ENCODE measurements at regions of chr12 and their contacts with region 1.

Region 1: DNA sequence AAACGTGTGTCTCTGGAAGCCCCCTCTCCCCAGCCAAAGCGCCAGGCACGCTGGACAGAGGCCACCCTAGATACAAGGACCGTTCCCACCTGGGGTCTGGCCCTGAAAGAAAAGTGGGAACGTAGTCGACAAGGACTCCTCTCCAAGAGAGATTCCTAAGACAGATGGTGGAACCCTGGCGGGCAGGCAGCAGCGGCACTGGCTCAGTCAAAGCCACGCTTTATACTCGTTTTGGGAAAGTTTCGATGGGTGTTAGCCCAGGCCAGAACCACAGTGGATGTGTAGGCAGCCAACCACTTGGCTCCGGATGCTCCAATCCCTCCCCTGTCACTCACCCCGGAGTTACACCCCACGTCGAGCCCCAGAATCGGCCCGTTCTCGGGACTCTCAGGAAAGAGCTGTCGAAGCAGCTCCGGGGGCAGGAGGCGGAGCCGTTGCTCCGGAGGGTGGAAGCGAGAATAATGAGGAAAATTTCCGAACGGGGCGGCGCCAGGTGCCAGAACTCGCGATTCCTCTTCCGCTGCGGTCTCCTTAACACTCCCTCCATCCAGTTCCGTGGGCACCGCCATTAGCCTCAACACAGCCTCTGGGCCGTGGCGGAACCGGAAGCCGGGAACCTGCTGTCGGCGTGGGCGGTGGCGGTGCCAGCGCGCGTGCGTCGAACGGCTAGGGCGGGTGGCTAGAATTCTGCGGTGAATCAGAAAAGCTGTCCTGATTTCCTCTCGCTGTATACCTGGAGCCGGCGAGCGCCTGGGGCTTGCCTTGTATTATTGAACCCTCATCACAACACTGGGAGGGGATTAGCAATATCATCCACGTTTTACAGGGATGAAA is at the start of gene BCDIN3D:
- DNase-seq: peak; percentile 92
- H3K4me3 ChIP-seq: peak within 1 kb of the TSS; percentile 62 to 86
- H3K27ac ChIP-seq: peak within 1 kb of the TSS; percentile 92 to 94
- H3K4me1 ChIP-seq: peaks cover 11 to 18% of the 10 kb centered on the region in 2 experiments; a peak in 3 of 4 replicates
- H3K27me3 ChIP-seq: no peaks in the 10 kb centered on the region; the same call in 1 of the 2 replicates
- CTCF ChIP-seq: no peak
- EP300 ChIP-seq: no peak
- RAD21 ChIP-seq: no peak
- polyA plus RNA-seq, gene BCDIN3D: 2.3 and 3.8 TPM in 2 replicates

Region 2: GRCh38 chr12:49403971-49404450 is 438.7 kb before region 1 on chr12:
- CTCF ChIA-PET with region 1: no interaction called
- POLR2A ChIA-PET with region 1: no interaction called
- DNase-seq: no peak
- H3K4me3 ChIP-seq: no peak overlapping the region
- H3K27ac ChIP-seq: no peak overlapping the region
- H3K4me1 ChIP-seq: peaks cover 5% of the 10 kb centered on the region in 2 experiments; a peak in 3 of 4 replicates
- H3K27me3 ChIP-seq: no peaks in the 10 kb centered on the region
- CTCF ChIP-seq: no peak
- EP300 ChIP-seq: no peak
- RAD21 ChIP-seq: no peak

Region 3: DNA sequence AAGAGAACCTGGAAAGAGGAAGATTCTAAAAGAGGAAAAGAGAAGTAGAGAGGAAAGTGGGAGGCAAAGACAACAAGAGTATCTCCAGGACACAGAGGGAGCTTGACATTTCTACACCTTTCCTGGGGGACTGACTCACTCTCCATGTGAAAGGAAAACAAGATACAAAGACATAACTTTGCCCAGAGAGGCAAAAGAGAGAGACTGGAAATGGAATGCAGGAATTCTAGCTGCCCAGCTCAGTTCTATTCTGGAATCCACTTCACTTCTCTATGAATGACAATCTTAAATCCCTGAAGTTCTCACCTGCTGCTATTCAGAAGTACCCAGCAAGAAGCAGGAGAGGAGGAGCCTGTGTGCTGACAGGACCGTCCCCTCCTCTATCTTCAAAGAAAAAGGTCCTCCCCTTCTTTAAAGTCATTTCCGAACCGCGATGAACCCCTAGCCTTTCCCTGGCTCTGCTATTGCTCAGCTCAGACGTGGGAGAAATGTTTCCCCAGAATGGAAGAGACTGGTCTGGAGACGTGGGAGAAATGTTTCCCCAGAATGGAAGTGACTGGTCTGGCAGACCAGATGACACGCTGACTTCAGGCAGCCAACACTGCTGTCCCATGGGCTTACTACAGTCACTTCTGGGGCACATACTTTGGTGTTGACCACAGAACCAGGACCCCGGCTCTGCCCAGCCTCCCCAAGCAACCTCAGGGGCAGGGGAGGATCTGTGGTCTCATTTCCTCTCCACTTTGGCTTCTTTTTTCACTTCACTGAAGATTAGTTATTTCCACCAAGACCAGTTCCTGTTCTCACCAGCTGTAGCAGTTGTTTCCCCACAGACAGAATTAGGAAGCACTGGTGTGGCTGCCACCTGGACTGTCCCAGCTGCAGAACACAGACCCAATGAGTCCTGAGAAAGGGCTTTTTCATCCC is 143.9 kb before region 1 on chr12:
- CTCF ChIA-PET with region 1: no interaction called
- POLR2A ChIA-PET with region 1: no interaction called
- DNase-seq: no peak
- H3K4me3 ChIP-seq: peak overlapping the region in 1 of 2 experiments; percentile 0; a peak in 1 of 4 replicates
- H3K27ac ChIP-seq: peak overlapping the region in 1 of 2 experiments; percentile 80; a peak in 3 of 4 replicates
- H3K4me1 ChIP-seq: peaks cover 14 to 33% of the 10 kb centered on the region in 2 experiments; a peak in 3 of 4 replicates
- H3K27me3 ChIP-seq: no peaks in the 10 kb centered on the region
- CTCF ChIP-seq: no peak
- EP300 ChIP-seq: no peak
- RAD21 ChIP-seq: no peak

Region 4: GRCh38 chr12:49776413-49776812 is 66.3 kb before region 1 on chr12:
- CTCF ChIA-PET with region 1: interaction called, 59 read pairs
- POLR2A ChIA-PET with region 1: interaction called, 3 read pairs
- DNase-seq: peak; percentile 79
- H3K4me3 ChIP-seq: peak overlapping the region in 1 of 2 experiments; percentile 9; a peak in 1 of 4 replicates
- H3K27ac ChIP-seq: no peak overlapping the region
- H3K4me1 ChIP-seq: no peaks in the 10 kb centered on the region
- H3K27me3 ChIP-seq: no peaks in the 10 kb centered on the region
- CTCF ChIP-seq: peak; percentile 84
- EP300 ChIP-seq: no peak
- RAD21 ChIP-seq: peak; percentile 91

Region 5: GRCh38 chr12:49828133-49829091 is 14.3 kb before region 1 on chr12 and contains the start of gene NCKAP5L:
- CTCF ChIA-PET with region 1: interaction called, 51 read pairs
- POLR2A ChIA-PET with region 1: interaction called, 9 read pairs
- DNase-seq: peak; percentile 99
- H3K4me3 ChIP-seq: peak within 1 kb of the TSS; percentile 87 to 92
- H3K27ac ChIP-seq: peak within 1 kb of the TSS; percentile 80 to 96
- H3K4me1 ChIP-seq: peaks cover 15 to 29% of the 10 kb centered on the region in 2 experiments; a peak in 3 of 4 replicates
- H3K27me3 ChIP-seq: no peaks in the 10 kb centered on the region
- CTCF ChIP-seq: no peak
- EP300 ChIP-seq: no peak
- RAD21 ChIP-seq: no peak
- polyA plus RNA-seq, gene NCKAP5L: 8.7 and 8.9 TPM in 2 replicates